ENCODE measurements at regions of chr6 and their contacts with region 1.

Region 1: GRCh38 chr6:57316581-57317059 is 810 bp upstream of the PRIM2 start:
- DNase-seq: peak; percentile 83
- ATAC-seq: peak; percentile 88
- H3K4me3 ChIP-seq: peak overlapping the region; percentile 98
- H3K27ac ChIP-seq: peak overlapping the region; percentile 71
- H3K4me1 ChIP-seq: peaks cover 8% of the 10 kb centered on the region; the same call in 1 of the 2 replicates
- H3K27me3 ChIP-seq: no peaks in the 10 kb centered on the region
- CTCF ChIP-seq: peak; percentile 81 to 98 (median 86); a peak in 5 of 6 replicates
- EP300 ChIP-seq: no peak
- POLR2A ChIP-seq: peak; percentile 59
- RAD21 ChIP-seq: peak; percentile 100

Region 2: GRCh38 chr6:56637640-56638039 is 679.0 kb before region 1 on chr6:
- CTCF ChIA-PET with region 1: no interaction called
- POLR2A ChIA-PET with region 1: no interaction called
- RAD21 ChIA-PET with region 1: no interaction called
- SMC1A ChIA-PET with region 1: no interaction called
- in situ Hi-C with region 1: no loop called
- intact Hi-C with region 1: loop called (anchors 5 kb)
- DNase-seq: peak; percentile 7
- ATAC-seq: peak; percentile 52; the same call in 2 of the 3 replicates
- H3K4me3 ChIP-seq: no peak overlapping the region
- H3K27ac ChIP-seq: no peak overlapping the region
- H3K4me1 ChIP-seq: no peaks in the 10 kb centered on the region
- H3K27me3 ChIP-seq: no peaks in the 10 kb centered on the region
- CTCF ChIP-seq: peak; percentile 51 to 59 (median 55); a peak in 5 of 6 replicates
- EP300 ChIP-seq: no peak
- POLR2A ChIP-seq: no peak
- RAD21 ChIP-seq: peak; percentile 74

Region 3: GRCh38 chr6:56902641-56903464 is 413.8 kb before region 1 on chr6:
- CTCF ChIA-PET with region 1: interaction called, 200 read pairs
- POLR2A ChIA-PET with region 1: interaction called, 4 read pairs
- RAD21 ChIA-PET with region 1: interaction called, 44 read pairs
- SMC1A ChIA-PET with region 1: interaction called, 89 read pairs
- in situ Hi-C with region 1: loop called (anchors 5 kb)
- intact Hi-C with region 1: loop called (anchors 1 kb)
- DNase-seq: no peak
- ATAC-seq: peak; percentile 80
- H3K4me3 ChIP-seq: no peak overlapping the region
- H3K27ac ChIP-seq: no peak overlapping the region
- H3K4me1 ChIP-seq: no peaks in the 10 kb centered on the region
- H3K27me3 ChIP-seq: no peaks in the 10 kb centered on the region
- CTCF ChIP-seq: peak; percentile 61 to 65 (median 61); a peak in 5 of 6 replicates
- EP300 ChIP-seq: no peak
- POLR2A ChIP-seq: no peak
- RAD21 ChIP-seq: peak; percentile 80

Region 4: DNA sequence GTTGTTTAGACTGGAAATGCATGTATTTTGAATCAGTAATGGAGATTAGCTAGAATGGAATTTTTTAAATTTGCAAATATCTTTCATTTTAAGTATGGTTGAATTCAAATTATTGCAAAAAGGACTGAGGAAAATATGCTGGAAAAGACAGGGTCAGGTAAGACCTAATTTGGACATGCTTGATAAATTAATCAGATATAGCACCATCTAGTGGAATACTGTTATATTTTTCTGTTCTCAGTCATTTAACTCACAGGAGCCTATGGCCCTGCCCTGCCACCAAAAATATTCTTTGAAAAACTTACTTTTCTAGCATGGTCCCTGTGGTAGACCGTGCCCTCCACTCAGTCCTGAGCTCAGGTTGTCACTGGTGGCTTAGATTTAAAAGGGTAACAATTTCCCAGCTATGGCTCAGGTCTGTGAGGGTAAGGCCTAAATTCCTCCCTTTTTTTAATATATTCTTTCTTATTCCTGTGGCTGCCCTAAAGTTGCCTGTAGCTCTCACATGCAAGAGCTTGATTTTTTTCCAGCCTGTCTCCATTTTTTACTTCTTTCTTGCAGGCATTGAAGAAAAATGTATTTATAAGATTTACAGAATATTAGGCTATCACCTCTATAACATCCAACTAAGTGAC is 295.4 kb before region 1 on chr6:
- CTCF ChIA-PET with region 1: interaction called, 12 read pairs
- POLR2A ChIA-PET with region 1: no interaction called
- RAD21 ChIA-PET with region 1: interaction called, 3 read pairs
- SMC1A ChIA-PET with region 1: interaction called, 4 read pairs
- in situ Hi-C with region 1: no loop called
- intact Hi-C with region 1: loop called (anchors 5 kb)
- DNase-seq: no peak
- ATAC-seq: peak; percentile 94
- H3K4me3 ChIP-seq: no peak overlapping the region
- H3K27ac ChIP-seq: no peak overlapping the region
- H3K4me1 ChIP-seq: no peaks in the 10 kb centered on the region
- H3K27me3 ChIP-seq: no peaks in the 10 kb centered on the region
- CTCF ChIP-seq: peak; percentile 38 to 47 (median 43); a peak in 4 of 6 replicates
- EP300 ChIP-seq: no peak
- POLR2A ChIP-seq: no peak
- RAD21 ChIP-seq: peak; percentile 27; the same call in 1 of the 2 replicates

Region 5: GRCh38 chr6:57097596-57097995 is 219.0 kb before region 1 on chr6:
- CTCF ChIA-PET with region 1: interaction called, 20 read pairs
- POLR2A ChIA-PET with region 1: no interaction called
- RAD21 ChIA-PET with region 1: no interaction called
- SMC1A ChIA-PET with region 1: interaction called, 3 read pairs
- in situ Hi-C with region 1: loop called (anchors 10 kb)
- intact Hi-C with region 1: loop called (anchors 5 kb)
- DNase-seq: no peak
- ATAC-seq: no peak
- H3K4me3 ChIP-seq: no peak overlapping the region
- H3K27ac ChIP-seq: no peak overlapping the region
- H3K4me1 ChIP-seq: peaks cover 3% of the 10 kb centered on the region; the same call in 1 of the 2 replicates
- H3K27me3 ChIP-seq: no peaks in the 10 kb centered on the region
- CTCF ChIP-seq: no peak
- EP300 ChIP-seq: no peak
- POLR2A ChIP-seq: no peak
- RAD21 ChIP-seq: no peak

Region 6: DNA sequence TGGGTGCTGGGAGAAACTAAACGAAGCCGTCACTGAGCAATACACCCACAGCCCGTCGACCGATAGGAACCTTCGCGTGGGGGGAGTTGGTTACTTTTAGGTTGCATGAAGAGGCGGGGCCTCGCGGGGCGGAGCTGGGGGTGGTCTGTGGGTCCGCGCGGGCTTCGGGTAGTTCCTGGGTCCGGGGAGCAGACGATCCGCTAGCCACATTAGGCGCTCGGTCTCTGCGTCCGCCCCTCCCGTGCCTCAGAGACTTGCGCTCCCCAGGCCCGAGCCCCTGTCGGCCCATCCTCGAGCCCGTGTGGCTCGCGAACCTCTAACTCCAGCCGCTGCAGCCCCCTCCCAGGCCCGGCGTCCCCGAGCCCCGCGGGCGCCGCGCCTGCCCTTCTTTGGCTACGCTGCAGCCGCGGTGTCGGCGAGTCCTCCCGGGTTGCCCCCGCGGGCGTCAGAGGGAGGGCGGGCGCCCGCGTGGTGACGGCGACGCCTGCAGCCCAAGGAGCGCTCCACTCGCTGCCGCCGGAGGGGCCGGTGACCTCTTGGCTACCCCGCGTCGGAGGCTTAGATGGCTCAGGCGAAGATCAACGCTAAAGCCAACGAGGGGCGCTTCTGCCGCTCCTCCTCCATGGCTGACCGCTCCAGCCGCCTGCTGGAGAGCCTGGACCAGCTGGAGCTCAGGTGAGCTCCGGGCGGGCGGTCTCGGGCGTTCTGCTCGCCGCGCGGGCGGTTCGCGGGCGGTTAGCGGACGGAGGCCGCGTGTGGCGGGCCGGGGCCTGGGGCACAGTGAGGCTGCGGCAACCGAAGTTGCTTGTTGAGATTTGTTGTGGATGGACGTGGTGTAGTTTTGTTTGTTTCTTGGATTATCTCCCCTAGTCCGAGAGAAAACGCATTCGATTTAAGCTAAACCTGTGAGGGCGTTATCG is 144.2 kb before region 1 on chr6 and contains the start of gene BAG2:
- CTCF ChIA-PET with region 1: interaction called, 3 read pairs
- POLR2A ChIA-PET with region 1: interaction called, 3 read pairs
- RAD21 ChIA-PET with region 1: interaction called, 6 read pairs
- SMC1A ChIA-PET with region 1: no interaction called
- in situ Hi-C with region 1: loop called (anchors 10 kb)
- intact Hi-C with region 1: loop called (anchors 2 kb)
- DNase-seq: peak; percentile 68
- ATAC-seq: peak; percentile 91
- H3K4me3 ChIP-seq: peak within 1 kb of the TSS; percentile 84
- H3K27ac ChIP-seq: peak within 1 kb of the TSS; percentile 86
- H3K4me1 ChIP-seq: no peaks in the 10 kb centered on the region
- H3K27me3 ChIP-seq: no peaks in the 10 kb centered on the region
- CTCF ChIP-seq: 0 out of 6 replicates have a peak, but pooled peaks have one; percentile 10 to 19 (median 18)
- EP300 ChIP-seq: no peak
- POLR2A ChIP-seq: peak; percentile 95
- RAD21 ChIP-seq: no peak
- polyA plus RNA-seq, gene BAG2: 8.9 to 10.8 TPM

Region 7: DNA sequence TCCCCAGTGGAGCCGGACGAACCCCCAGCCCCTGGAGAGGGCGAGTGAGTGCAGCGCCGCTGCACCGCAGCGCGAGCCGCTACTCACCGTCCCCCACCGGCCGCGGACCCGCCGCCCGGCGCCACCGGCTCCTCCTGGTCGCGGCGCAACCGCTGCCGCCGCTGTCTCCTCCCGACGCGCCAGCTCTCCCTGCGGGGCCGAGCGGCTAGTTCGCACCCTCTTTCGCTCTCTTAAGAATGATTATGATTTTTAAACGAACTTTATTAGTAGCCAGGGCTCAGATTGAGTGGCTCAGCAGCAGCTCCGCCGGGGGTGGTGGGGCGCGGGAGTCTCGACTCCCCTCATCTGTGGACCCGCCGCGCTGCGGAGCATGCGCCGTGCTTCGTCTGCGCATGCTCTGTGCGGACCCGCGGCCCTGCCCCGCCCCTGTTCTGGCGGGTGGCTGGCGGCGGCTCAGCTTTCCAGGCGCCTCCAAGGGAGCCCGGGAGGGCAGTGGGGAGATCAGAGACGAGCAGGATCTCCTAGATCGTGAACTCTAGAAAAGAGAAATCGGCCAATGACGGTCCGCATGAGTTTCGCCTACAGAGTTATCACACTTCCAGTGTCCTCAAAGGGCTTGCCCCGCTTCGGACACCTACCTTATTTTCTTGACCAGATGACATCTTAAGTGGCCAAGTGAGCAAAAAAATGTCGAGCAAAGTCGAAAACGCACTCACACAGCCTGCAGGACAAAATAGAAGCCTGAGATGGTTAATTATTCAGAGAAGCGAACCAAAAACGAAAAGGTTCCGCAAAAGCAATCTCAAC is 94.5 kb before region 1 on chr6 and contains the start of gene RAB23:
- CTCF ChIA-PET with region 1: interaction called, 6 read pairs
- POLR2A ChIA-PET with region 1: interaction called, 3 read pairs
- RAD21 ChIA-PET with region 1: interaction called, 3 read pairs
- SMC1A ChIA-PET with region 1: interaction called, 3 read pairs
- in situ Hi-C with region 1: no loop called
- intact Hi-C with region 1: loop called (anchors 2 kb)
- DNase-seq: peak; percentile 58
- ATAC-seq: peak; percentile 91
- H3K4me3 ChIP-seq: peak within 1 kb of the TSS; percentile 81
- H3K27ac ChIP-seq: peak within 1 kb of the TSS; percentile 6
- H3K4me1 ChIP-seq: no peaks in the 10 kb centered on the region
- H3K27me3 ChIP-seq: no peaks in the 10 kb centered on the region
- CTCF ChIP-seq: no peak; a peak in 1 of 6 replicates
- EP300 ChIP-seq: no peak
- POLR2A ChIP-seq: peak; percentile 79
- RAD21 ChIP-seq: no peak
- polyA plus RNA-seq, gene RAB23: 0.80 to 1.3 TPM

Measured in GM12878 (cell line).